ENCODE measurements at regions of chr1 and their contacts with region 1.

Region 1: DNA sequence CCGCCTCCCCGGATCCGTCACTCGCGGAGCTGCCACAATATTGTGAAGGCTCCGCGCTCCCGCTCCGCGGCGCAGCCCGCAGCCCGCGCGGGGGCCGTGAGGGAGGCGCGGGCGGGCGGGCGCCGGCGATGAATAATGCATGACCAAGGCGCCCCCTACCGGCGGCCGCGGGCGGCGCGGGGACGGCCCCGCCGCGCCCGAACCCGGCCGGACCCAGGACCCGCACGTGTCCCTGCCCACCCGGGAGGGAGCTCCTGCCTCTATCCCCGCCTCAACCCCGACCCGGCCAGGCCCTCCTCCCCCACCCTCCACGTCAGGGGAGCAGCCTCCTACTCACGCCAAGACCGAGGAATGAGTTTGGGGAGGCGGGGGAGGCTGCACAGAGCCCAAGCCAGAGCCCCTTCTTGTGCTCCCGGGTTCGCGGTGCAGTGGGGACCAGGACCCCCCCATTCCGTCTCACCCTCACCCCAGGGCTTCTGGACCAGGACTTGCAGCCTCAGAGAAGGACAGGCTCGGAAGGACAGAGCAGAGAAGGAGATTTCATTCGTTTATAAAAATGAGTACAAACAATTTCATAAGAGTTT is 70.8 kb upstream of the CASZ1 start:
- DNase-seq: peak; percentile 83
- ATAC-seq: peak; percentile 94
- H3K4me3 ChIP-seq: peak overlapping the region; percentile 32
- H3K27ac ChIP-seq: no peak overlapping the region
- H3K4me1 ChIP-seq: peaks cover 11% of the 10 kb centered on the region
- H3K27me3 ChIP-seq: peaks cover 29% of the 10 kb centered on the region
- CTCF ChIP-seq: peak; percentile 58

Region 2: DNA sequence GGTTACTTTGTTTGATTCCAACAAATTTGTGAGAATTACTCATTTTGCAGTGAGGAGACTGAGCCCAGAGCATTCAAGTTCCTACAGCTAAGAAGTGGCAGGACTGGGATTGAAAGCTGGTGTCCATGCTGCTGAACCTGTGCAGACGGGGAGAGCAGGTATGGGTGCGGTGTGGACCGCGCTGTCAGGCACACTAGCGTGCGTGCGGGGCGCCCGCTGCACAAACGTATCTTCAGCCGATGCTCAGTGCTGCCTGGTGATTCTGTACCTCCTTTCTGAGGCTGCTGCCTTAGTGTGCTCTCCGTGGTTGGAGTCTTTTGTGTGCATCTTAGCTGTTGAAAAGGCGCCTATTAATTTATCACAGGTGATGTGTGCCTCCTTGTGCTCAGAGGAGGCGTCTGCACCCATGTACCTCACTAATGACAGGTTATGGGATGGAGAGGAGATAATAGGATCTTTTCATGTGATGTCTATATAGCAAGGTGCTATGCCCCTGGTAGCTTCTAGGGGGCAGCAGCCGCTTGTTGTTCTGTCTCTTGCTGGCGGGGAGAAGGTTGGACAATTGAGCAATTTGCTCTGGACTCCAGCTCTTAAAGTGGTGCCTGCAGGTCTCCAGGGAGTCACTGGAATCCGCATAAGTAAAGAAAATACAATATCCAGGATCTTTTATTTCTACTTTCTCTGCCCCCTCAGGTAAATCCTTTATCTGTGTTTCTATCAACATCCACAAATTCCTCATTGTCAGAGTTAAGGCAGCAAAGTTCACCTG is 359.9 kb before region 1 on chr1:
- intact Hi-C with region 1: loop called (anchors 10 kb)
- DNase-seq: no peak
- ATAC-seq: peak; percentile 91
- H3K4me3 ChIP-seq: no peak overlapping the region
- H3K27ac ChIP-seq: no peak overlapping the region
- H3K4me1 ChIP-seq: peaks cover 35% of the 10 kb centered on the region
- H3K27me3 ChIP-seq: no peaks in the 10 kb centered on the region
- CTCF ChIP-seq: peak; percentile 86